ENCODE measurements at regions of chr4 and their contacts with region 1.

Region 1: GRCh38 chr4:145557720-145558119 is 61.5 kb upstream of the MMAA start:
- DNase-seq: no peak
- H3K4me3 ChIP-seq: no peak overlapping the region
- H3K27ac ChIP-seq: no peak overlapping the region
- H3K4me1 ChIP-seq: peaks cover 0 to 7% (median 4%) of the 10 kb centered on the region in 4 donors
- H3K27me3 ChIP-seq: no peaks in the 10 kb centered on the region
- CTCF ChIP-seq: peak; percentile 85 to 90 (median 87)
- EP300 ChIP-seq: no peak
- POLR2A ChIP-seq: no peak

Region 2: GRCh38 chr4:145216535-145216934 is 341.2 kb before region 1 on chr4:
- intact Hi-C with region 1: loop called (anchors 5 kb)
- DNase-seq: no peak
- H3K4me3 ChIP-seq: no peak overlapping the region
- H3K27ac ChIP-seq: no peak overlapping the region
- H3K4me1 ChIP-seq: no peaks in the 10 kb centered on the region
- H3K27me3 ChIP-seq: no peaks in the 10 kb centered on the region
- CTCF ChIP-seq: peak; percentile 31 to 46 (median 37)
- EP300 ChIP-seq: no peak
- POLR2A ChIP-seq: no peak

Region 3: GRCh38 chr4:145234091-145234706 is 323.5 kb before region 1 on chr4:
- intact Hi-C with region 1: loop called (anchors 5 kb)
- DNase-seq: no peak
- H3K4me3 ChIP-seq: no peak overlapping the region
- H3K27ac ChIP-seq: no peak overlapping the region
- H3K4me1 ChIP-seq: peaks cover 0 to 22% (median 7%) of the 10 kb centered on the region in 4 donors
- H3K27me3 ChIP-seq: no peaks in the 10 kb centered on the region
- CTCF ChIP-seq: peak; percentile 71 to 76 (median 75)
- EP300 ChIP-seq: no peak
- POLR2A ChIP-seq: no peak

Region 4: DNA sequence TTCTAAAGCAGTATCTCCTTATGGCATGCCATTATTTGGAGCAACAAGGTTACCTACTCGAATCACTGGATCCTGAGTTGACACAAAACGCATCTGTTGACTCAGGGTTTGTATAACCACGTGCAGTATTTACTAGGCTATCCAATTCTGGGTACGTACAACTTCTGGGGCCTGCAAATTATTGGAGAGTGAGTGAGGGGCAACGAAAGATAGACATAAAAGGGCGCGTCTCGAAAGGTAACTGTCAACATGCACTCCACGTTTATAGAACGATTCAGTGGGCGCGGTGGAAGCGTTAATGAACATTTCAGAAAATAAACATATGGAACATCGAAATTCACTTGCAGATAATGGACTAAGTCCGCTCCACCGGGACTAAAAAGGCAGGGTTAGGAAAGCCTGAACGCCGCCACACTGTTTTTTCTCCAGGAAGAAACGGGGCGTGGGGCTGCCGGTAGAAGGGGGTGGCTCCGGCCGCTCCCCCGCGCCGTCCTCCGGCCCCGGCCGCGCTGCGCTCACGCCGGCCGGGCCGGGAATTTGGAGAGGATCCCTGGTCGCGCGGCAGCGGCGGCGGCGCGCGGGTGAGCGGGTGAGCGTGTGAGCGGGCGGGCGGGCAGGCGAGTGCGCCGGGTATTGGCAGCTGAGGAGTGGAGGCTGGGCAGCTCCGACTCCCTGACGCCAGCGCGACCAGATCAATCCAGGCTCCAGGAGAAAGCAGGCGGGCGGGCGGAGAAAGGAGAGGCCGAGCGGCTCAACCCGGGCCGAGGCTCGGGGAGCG is 76.4 kb before region 1 on chr4 and contains the start of gene SMAD1:
- intact Hi-C with region 1: loop called (anchors 5 kb)
- DNase-seq: peak; percentile 93
- H3K4me3 ChIP-seq: peak within 1 kb of the TSS; percentile 76 to 99 (median 96)
- H3K27ac ChIP-seq: peak within 1 kb of the TSS; percentile 95 to 99 (median 96)
- H3K4me1 ChIP-seq: peaks cover 15 to 43% (median 40%) of the 10 kb centered on the region in 4 donors
- H3K27me3 ChIP-seq: no peaks in the 10 kb centered on the region
- CTCF ChIP-seq: no peak
- EP300 ChIP-seq: no peak
- POLR2A ChIP-seq: peak; percentile 62
- total RNA-seq, gene SMAD1: 19.5 to 34.3 (median 29.2) TPM

Region 5: DNA sequence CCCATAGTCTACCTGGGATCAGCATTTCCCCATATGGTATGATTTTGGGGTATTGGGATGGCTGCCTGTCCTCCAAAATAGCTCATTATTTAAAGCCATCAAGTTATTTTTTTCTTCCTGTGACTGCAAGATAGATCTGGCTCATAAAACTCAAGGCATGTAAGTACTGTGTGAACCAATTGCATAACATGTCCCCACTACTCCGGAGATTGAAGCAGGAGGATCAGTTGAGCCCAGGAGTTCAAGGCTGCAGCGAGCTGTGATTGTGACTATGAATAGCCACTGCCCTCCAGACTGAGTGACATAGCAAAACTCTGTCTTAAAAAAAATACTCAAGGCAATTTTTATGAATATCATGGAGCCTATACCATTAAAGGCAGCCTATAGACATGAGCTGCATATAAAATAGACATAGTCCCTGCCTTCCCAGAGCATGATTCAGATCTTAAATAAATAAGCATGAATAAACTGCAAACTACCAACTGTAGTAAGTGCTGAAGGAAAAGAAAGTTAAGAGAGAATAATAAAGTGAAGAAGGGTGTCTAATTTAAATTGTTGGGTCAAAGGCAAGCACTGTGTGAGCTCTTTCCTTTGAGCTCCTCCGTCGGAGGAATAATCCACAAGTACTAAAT is 44.5 kb after region 1 on chr4:
- intact Hi-C with region 1: no loop called
- DNase-seq: no peak
- H3K4me3 ChIP-seq: no peak overlapping the region
- H3K27ac ChIP-seq: no peak overlapping the region
- H3K4me1 ChIP-seq: no peaks in the 10 kb centered on the region
- H3K27me3 ChIP-seq: no peaks in the 10 kb centered on the region
- CTCF ChIP-seq: no peak
- EP300 ChIP-seq: no peak
- POLR2A ChIP-seq: no peak

Measured in esophagus muscularis mucosa (tissue), 4 donors.